ENCODE measurements at regions of chr20 and their contacts with region 1.

Region 1: DNA sequence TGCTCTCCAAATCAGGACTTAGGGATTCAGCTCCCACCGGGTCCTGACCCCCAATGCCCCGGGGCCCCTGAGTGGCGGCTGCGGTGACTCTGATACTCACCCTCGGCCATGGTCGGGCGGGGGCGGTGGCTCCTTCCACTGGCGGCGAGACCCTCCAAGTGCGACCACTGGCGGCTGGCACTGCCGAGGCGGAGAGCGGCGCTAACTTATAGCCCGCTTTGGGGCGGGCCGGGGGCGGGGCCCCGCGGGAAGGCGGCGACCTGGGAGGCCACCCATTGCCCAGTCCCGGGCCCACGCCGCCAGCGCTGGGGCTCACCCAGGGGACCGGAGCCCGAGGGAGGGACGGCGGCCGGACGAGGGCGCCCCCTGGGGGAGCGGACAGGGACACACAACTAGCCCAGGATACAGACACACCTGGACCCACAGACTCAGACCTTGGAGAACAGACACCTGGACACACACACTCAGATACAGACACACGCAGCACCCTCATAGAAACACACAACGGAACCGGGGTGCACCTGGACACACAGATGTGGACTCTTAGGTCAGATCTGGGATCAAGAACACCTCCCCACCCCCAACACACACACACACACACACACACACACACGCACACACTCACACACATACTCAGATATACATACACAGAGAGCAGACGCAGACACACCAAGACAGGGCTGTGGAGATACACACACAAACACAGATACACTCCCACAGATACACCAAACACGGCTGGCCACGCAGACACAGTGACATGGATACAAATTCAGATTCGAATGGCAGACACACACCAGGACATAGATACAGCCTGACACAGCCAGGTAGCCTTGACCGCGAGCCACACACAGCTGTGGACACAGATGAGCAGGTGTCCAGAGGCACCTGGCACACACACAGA is at the start of gene TGM2:
- DNase-seq: peak; percentile 82 to 85 (median 84)
- H3K4me3 ChIP-seq: peak within 1 kb of the TSS; percentile 18 to 71 (median 36)
- H3K4me3 Mint-ChIP-seq: peak within 1 kb of the TSS; percentile 72 to 77
- H3K27ac ChIP-seq: no peak within 1 kb of the TSS
- H3K27ac Mint-ChIP-seq: peak within 1 kb of the TSS in 6 of 7 donors; percentile 55 to 83 (median 71)
- H3K4me1 ChIP-seq: peaks cover 46 to 54% of the 10 kb centered on the region in 2 donors
- H3K4me1 Mint-ChIP-seq: peaks cover 52% of the 10 kb centered on the region
- H3K27me3 ChIP-seq: no peaks in the 10 kb centered on the region
- H3K27me3 Mint-ChIP-seq: peaks cover 2 to 6% (median 4%) of the 10 kb centered on the region in 3 donors
- CTCF ChIP-seq: peak; percentile 89
- polyA plus RNA-seq, gene TGM2: 0.47 to 1.7 (median 1.6) TPM

Region 2: GRCh38 chr20:38057351-38057972 is 107.9 kb before region 1 on chr20:
- intact Hi-C with region 1: loop called in 1 of 2 experiments (anchors 5 kb)
- DNase-seq: peak; percentile 64 to 86 (median 70)
- H3K4me3 ChIP-seq: no peak overlapping the region
- H3K4me3 Mint-ChIP-seq: no peak overlapping the region
- H3K27ac ChIP-seq: no peak overlapping the region
- H3K27ac Mint-ChIP-seq: peak overlapping the region in 1 of 7 donors; percentile 77
- H3K4me1 ChIP-seq: no peaks in the 10 kb centered on the region
- H3K4me1 Mint-ChIP-seq: peaks cover 7% of the 10 kb centered on the region
- H3K27me3 ChIP-seq: no peaks in the 10 kb centered on the region
- H3K27me3 Mint-ChIP-seq: no peaks in the 10 kb centered on the region
- CTCF ChIP-seq: peak; percentile 100

Region 3: GRCh38 chr20:38073307-38074071 is 91.8 kb before region 1 on chr20:
- intact Hi-C with region 1: loop called (anchors 2 to 5 kb)
- DNase-seq: peak; percentile 37 to 44 (median 38)
- H3K4me3 ChIP-seq: no peak overlapping the region
- H3K4me3 Mint-ChIP-seq: no peak overlapping the region
- H3K27ac ChIP-seq: no peak overlapping the region
- H3K27ac Mint-ChIP-seq: peak overlapping the region in 2 of 7 donors; percentile 28 to 84
- H3K4me1 ChIP-seq: no peaks in the 10 kb centered on the region
- H3K4me1 Mint-ChIP-seq: peaks cover 2% of the 10 kb centered on the region
- H3K27me3 ChIP-seq: no peaks in the 10 kb centered on the region
- H3K27me3 Mint-ChIP-seq: no peaks in the 10 kb centered on the region
- CTCF ChIP-seq: peak; percentile 86

Region 4: DNA sequence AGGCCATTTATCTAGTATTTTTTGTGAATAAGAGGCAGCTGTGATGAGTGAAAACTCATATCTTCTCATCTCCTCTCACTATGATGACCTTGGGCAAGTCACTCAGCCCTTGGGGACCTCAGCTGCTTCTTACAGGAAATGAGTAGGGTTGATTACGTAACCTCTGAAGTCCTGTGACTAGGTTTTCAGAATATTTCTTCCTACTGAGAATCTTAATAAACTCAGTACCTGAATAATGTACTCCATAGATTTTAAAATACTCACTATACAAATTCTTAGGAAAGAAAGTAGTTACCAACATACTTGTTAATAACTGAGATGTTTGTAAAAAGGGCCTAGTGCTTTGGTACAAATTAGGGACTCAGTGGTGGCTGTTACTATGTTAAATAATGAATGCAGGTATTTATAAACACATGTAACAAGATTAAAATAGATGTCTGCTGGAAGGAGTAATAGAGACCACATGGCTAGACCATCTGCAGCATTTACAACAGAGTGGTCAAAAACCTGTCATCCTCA is 70.9 kb before region 1 on chr20:
- intact Hi-C with region 1: loop called in 1 of 2 experiments (anchors 5 kb)
- DNase-seq: peak; percentile 87 to 96 (median 95)
- H3K4me3 ChIP-seq: peak overlapping the region in 1 of 3 experiments; percentile 48
- H3K4me3 Mint-ChIP-seq: peak overlapping the region in 1 of 2 donors; percentile 85
- H3K27ac ChIP-seq: peak overlapping the region; percentile 96 to 98
- H3K27ac Mint-ChIP-seq: peak overlapping the region; percentile 98 to 100 (median 99)
- H3K4me1 ChIP-seq: peaks cover 56 to 70% of the 10 kb centered on the region in 2 donors
- H3K4me1 Mint-ChIP-seq: peaks cover 66% of the 10 kb centered on the region
- H3K27me3 ChIP-seq: no peaks in the 10 kb centered on the region
- H3K27me3 Mint-ChIP-seq: peaks cover 0 to under 1% (median 0%) of the 10 kb centered on the region in 3 donors
- CTCF ChIP-seq: no peak

Region 5: GRCh38 chr20:38113401-38114325 is 51.7 kb before region 1 on chr20:
- intact Hi-C with region 1: loop called in 1 of 2 experiments (anchors 5 kb)
- DNase-seq: peak; percentile 56 to 60 (median 60)
- H3K4me3 ChIP-seq: no peak overlapping the region
- H3K4me3 Mint-ChIP-seq: peak overlapping the region; percentile 13 to 70
- H3K27ac ChIP-seq: no peak overlapping the region
- H3K27ac Mint-ChIP-seq: peak overlapping the region in 6 of 7 donors; percentile 4 to 78 (median 51)
- H3K4me1 ChIP-seq: peaks cover 13 to 18% of the 10 kb centered on the region in 2 donors
- H3K4me1 Mint-ChIP-seq: peaks cover 49% of the 10 kb centered on the region
- H3K27me3 ChIP-seq: no peaks in the 10 kb centered on the region
- H3K27me3 Mint-ChIP-seq: no peaks in the 10 kb centered on the region
- CTCF ChIP-seq: peak; percentile 55

Region 6: GRCh38 chr20:38201356-38201755 is 36.0 kb after region 1 on chr20:
- intact Hi-C with region 1: loop called in 1 of 2 experiments (anchors 5 kb)
- DNase-seq: peak; percentile 87 to 93 (median 91)
- H3K4me3 ChIP-seq: no peak overlapping the region
- H3K4me3 Mint-ChIP-seq: no peak overlapping the region
- H3K27ac ChIP-seq: peak overlapping the region in 1 of 2 donors; percentile 37
- H3K27ac Mint-ChIP-seq: peak overlapping the region; percentile 33 to 84 (median 69)
- H3K4me1 ChIP-seq: peaks cover 39 to 46% of the 10 kb centered on the region in 2 donors
- H3K4me1 Mint-ChIP-seq: peaks cover 57% of the 10 kb centered on the region
- H3K27me3 ChIP-seq: no peaks in the 10 kb centered on the region
- H3K27me3 Mint-ChIP-seq: peaks cover 0 to 3% (median 1%) of the 10 kb centered on the region in 3 donors
- CTCF ChIP-seq: no peak

Region 7: DNA sequence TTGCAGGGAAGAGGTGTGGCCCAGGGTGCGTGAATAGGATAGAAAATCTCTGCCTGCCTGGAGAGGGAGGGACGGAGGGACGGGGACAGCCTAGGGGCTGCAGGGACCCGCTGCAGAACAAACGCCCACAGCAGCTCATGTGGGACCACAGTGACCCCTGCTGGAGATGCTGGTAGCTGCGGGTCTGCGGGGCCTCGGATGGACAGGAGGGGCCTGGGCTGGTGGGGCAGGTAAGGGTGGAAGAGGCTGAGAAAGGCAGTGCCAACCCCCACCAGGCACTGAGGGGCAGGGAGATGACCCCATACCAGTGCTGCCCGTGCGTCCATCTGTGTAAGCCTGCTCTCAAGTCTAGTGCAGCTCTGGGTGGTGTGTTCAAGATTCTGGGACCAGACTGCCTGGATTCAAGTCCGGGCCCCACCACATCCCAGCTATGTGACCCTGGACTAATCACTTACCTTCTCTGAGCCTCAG is 55.8 kb after region 1 on chr20:
- intact Hi-C with region 1: loop called (anchors 5 kb)
- DNase-seq: peak; percentile 55 to 68 (median 66)
- H3K4me3 ChIP-seq: no peak overlapping the region
- H3K4me3 Mint-ChIP-seq: peak overlapping the region; percentile 50 to 60
- H3K27ac ChIP-seq: no peak overlapping the region
- H3K27ac Mint-ChIP-seq: peak overlapping the region in 2 of 7 donors; percentile 59 to 63
- H3K4me1 ChIP-seq: peaks cover 20 to 22% of the 10 kb centered on the region in 2 donors
- H3K4me1 Mint-ChIP-seq: peaks cover 37% of the 10 kb centered on the region
- H3K27me3 ChIP-seq: no peaks in the 10 kb centered on the region
- H3K27me3 Mint-ChIP-seq: peaks cover 0 to 4% (median 3%) of the 10 kb centered on the region in 3 donors
- CTCF ChIP-seq: peak; percentile 93